ENCODE measurements at regions of chr11 and their contacts with region 1.

Region 1: DNA sequence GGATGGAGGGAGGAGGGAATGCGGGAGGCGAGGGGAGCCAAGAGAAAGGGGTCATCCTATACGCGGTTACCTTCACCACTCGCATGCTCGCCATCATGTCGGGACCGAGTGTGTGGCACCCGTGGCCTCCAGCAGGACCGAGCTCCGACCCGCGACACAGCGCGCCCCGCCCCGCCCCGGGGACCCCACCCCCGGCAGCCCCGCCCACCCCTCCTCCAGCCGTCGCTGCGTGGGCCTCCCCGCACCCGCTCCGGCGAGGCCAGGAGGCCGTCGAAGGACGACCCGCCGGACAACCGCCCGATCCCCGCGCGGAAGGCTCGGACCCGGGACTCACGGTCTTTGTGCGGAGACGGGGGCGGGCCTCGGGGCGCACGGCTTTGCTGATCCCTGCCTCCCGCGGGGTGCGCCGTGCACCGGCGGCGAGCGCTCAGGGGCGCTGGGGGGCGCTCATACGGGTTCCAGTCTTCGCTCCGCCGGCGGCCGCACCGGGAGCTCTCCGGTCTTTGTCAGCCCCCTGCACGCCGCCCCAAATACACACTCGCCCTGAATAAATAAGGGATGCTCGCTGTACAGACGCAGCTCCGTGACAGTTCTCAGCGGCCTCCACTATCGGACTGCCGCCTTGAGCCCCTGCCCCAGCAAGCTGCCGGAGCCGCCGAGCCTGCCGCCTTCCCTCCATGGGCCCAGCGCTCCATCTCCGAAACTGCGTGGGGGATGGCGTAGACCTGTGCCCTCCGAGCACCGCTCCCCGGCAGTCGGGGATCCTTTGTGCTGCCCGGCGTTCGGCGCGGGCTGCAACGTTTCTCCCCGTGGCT is at the start of gene UBE2L6:
- DNase-seq: peak; percentile 79
- ATAC-seq: peak; percentile 85
- total RNA-seq, gene UBE2L6: 53.5 TPM

Region 2: GRCh38 chr11:57402188-57403002 is 165.3 kb before region 1 on chr11:
- intact Hi-C with region 1: no loop called
- DNase-seq: no peak
- ATAC-seq: no peak

Region 3: DNA sequence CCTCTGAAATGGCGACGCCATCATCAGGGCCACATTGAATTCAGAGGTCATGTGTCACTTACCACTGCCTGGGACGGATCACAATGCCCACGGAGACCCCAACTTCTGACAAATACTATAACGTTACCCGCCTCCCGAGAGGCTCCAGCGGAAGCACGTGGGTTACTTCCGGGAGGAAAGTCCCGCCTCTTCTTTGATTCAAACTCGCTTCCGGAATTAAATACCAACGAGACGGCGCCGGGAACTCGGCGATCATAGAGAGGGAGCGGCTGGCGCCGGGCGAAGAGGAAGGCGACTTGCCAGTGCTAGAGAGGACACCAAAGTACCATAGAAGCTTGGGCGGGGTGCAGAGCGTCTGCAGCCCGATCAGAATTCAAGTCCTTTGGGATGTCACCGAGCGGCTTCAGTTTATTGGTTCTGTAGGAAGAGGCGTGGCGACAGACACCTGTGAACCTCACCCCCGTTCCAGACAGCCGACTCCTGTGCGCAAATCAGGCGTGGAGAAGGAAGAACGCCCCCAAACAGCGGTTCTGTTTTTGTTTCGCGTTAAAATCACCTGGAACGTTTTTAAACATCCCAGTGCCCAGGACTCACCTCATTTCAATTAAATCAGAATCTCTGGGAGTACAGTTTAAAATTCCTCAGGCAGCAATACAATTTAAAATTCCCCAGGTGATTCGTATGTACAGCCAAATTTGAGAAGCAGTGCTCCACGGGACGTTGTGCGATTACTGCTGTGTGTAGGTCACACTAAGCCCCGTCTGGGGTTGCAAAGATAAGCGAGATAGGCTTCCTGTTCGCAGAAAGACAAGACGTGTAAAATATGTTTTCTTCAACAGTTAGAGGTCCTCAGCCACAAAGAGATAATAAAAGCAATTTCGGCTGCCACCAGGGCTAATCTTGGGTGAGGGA is 36.9 kb before region 1 on chr11 and contains the start of gene TIMM10:
- intact Hi-C with region 1: no loop called
- DNase-seq: peak; percentile 96
- ATAC-seq: peak; percentile 98
- total RNA-seq, gene TIMM10: 42.0 TPM

Region 4: GRCh38 chr11:57638005-57638781 is 70.5 kb after region 1 on chr11:
- intact Hi-C with region 1: loop called (anchors 5 kb)
- DNase-seq: peak; percentile 81
- ATAC-seq: peak; percentile 83

Measured in sciatic nerve (tissue), 2 donors.